HEK293 (cell line): ENCODE measurements at regions of chr1 and their contacts with region 1.

Region 1: GRCh38 chr1:234326497-234327366 is 46.5 kb upstream of the COA6 start:
- H3K4me3 ChIP-seq: peak overlapping the region; percentile 39
- H3K27ac ChIP-seq: no peak overlapping the region
- H3K4me1 ChIP-seq: no peaks in the 10 kb centered on the region
- CTCF ChIP-seq: peak; percentile 91

Region 2: DNA sequence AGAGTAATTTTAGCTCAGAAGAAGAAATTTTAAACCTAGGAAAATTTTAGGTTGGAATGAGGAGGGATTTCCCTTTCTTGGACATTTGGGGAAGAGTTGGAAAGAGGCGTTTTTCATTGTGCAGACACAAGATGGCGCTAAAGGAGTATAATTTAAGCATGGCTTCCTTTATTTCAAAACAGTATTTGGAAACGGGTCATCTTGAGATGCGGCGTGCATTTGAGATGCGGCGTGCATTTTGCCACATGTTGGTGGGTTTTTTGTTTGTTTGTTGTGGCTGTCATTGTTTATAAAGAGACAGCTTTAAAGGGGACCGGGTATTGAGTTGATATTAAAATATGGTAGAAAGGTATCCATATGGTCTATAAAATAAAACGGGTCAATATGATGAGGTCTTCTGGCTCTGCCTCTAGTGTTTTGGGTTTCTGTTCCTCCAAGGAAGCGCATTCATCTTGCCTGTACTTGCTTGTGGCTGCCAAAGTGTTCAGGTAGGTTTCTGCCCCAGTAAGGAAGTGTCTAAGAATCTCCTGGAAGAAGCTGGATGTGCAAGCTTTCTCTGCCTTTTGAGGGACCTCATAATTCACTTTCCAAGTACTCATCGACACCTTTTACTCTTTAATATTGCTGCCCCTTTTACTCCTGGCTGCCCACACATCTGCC is 212.0 kb before region 1 on chr1:
- CTCF ChIA-PET with region 1: interaction called, 12 read pairs
- POLR2A ChIA-PET with region 1: no interaction called
- H3K4me3 ChIP-seq: no peak overlapping the region
- H3K27ac ChIP-seq: no peak overlapping the region
- H3K4me1 ChIP-seq: no peaks in the 10 kb centered on the region
- CTCF ChIP-seq: peak; percentile 80

Region 3: DNA sequence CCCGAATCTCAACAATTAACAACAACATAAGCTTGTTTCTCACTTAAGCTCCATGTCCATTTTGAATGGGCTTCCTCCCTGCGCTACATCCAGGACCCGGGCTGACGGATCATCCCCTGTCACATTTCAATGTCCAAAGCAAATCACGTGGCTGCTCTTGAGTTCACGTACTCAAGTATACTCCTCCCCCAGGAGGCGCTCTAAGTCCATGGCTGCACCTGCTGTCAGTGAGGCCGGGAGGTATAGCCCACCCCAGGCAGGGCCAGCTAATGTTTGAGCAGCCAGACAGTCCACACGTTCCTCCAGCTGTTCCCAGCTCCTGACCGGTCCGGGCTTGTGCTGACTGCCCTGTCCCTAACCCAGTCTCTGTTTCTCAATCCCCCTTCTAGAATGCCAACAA is 201.4 kb before region 1 on chr1:
- CTCF ChIA-PET with region 1: interaction called, 21 read pairs
- POLR2A ChIA-PET with region 1: no interaction called
- H3K4me3 ChIP-seq: no peak overlapping the region
- H3K27ac ChIP-seq: no peak overlapping the region
- H3K4me1 ChIP-seq: no peaks in the 10 kb centered on the region
- CTCF ChIP-seq: peak; percentile 85

Region 4: GRCh38 chr1:234315091-234315541 is 11.6 kb before region 1 on chr1:
- CTCF ChIA-PET with region 1: interaction called, 199 read pairs
- POLR2A ChIA-PET with region 1: interaction called, 3 read pairs
- H3K4me3 ChIP-seq: no peak overlapping the region
- H3K27ac ChIP-seq: no peak overlapping the region
- H3K4me1 ChIP-seq: no peaks in the 10 kb centered on the region
- CTCF ChIP-seq: no peak

Region 5: DNA sequence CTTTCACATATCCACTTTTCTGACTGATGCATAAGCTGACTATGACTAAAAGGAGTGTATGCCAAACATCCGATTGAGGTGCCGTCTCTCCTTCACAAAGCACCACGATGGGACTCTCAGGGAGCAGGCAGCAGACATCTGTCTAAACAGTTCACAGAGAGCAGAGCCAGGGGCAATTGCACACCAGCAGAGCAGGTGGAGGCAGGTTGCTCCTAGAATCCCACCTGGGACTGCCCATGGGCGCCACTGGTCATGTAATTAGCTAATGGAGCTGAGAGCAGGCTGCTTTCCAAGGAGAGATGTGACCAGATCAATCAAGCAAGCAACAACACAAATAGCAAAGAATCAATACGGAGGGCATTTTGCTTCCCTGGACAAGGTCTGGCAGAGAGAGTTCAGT is 16.0 kb after region 1 on chr1:
- CTCF ChIA-PET with region 1: interaction called, 51 read pairs
- POLR2A ChIA-PET with region 1: no interaction called
- H3K4me3 ChIP-seq: no peak overlapping the region
- H3K27ac ChIP-seq: no peak overlapping the region
- H3K4me1 ChIP-seq: no peaks in the 10 kb centered on the region
- CTCF ChIP-seq: no peak

Region 6: DNA sequence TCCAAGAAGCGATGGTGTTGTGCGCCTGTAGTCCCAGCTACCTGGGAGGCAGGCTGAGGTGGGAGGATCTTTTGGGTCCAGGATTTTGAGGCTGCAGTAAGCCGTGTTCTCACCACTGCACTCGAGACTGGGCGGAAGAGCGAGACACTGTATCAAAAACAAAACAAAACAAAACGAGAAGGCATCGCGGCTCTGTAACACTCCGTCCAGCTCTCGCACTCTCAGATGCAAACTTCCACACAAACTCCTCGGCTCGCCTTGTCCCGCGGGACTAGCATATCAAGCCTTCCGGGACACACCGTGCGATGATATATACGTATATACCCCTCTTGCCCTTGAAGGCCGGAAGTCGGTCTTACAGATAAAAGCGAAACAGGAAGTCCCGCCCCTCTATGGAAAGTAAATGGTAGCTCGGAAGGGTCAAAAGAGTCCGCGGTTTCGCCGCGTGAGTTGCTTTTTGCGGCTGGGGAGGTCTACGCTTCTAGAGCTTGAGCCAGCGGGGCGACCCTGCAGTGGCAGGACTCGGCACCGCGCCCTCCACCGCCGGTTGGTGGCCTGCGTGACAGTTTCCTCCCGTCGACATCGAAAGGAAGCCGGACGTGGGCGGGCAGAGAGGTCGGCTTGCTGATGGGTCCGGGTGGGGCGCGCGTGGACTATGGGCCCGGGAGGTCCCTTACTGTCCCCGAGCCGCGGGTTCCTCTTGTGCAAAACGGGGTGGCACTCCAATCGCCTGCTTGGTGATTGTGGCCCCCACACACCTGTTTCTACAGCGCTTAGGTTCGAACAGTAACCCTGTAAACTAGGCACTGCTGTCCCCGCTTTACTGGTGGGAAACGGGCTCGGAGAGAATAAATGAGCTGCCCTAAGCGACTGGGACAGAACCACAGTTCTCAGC is 46.6 kb after region 1 on chr1 and contains the start of gene COA6:
- CTCF ChIA-PET with region 1: interaction called, 11 read pairs
- POLR2A ChIA-PET with region 1: interaction called, 8 read pairs
- H3K4me3 ChIP-seq: peak within 1 kb of the TSS; percentile 95
- H3K27ac ChIP-seq: peak within 1 kb of the TSS; percentile 85
- H3K4me1 ChIP-seq: no peaks in the 10 kb centered on the region
- CTCF ChIP-seq: peak; percentile 89